ENCODE measurements at regions of chr17 and their contacts with region 1.

Region 1: DNA sequence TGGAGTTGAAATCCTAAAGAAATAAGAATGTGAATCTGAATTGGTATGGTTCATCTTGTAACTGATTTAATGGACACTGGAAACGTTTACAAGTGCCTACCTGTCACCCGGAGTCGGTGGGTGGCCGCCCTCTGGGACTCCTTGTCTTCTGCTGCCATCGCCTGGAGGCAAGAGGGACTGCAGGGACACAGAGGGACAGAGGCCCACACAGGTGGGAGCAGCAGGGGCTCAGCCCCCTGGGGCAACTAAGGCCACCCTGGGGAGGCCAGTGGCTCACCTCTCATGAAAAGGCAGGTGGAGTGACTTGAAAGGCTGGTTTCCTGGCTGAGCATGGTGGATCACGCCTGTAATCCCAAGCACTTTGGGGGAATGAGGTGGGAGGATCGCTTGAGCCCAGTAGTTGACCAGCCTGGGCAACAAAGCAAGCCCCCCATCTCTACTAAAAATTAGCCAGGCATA is 23.2 kb downstream of the TMEM92 start:
- DNase-seq: peak; percentile 82
- ATAC-seq: peak; percentile 99
- H3K4me3 ChIP-seq: no peak overlapping the region
- H3K27ac ChIP-seq: no peak overlapping the region
- H3K4me1 ChIP-seq: no peaks in the 10 kb centered on the region
- H3K27me3 ChIP-seq: no peaks in the 10 kb centered on the region
- CTCF ChIP-seq: peak; percentile 96

Region 2: GRCh38 chr17:50169121-50169764 is 128.2 kb before region 1 on chr17:
- CTCF ChIA-PET with region 1: no interaction called
- POLR2A ChIA-PET with region 1: interaction called, 34 read pairs
- intact Hi-C with region 1: no loop called
- DNase-seq: peak; percentile 80
- ATAC-seq: peak; percentile 51
- H3K4me3 ChIP-seq: peak overlapping the region; percentile 21; the same call in 1 of the 2 replicates
- H3K27ac ChIP-seq: peak overlapping the region; percentile 51
- H3K4me1 ChIP-seq: peaks cover 29% of the 10 kb centered on the region
- H3K27me3 ChIP-seq: no peaks in the 10 kb centered on the region
- CTCF ChIP-seq: peak; percentile 97

Region 3: GRCh38 chr17:50269477-50270434 is 27.7 kb before region 1 on chr17:
- CTCF ChIA-PET with region 1: interaction called, 9 read pairs
- POLR2A ChIA-PET with region 1: no interaction called
- intact Hi-C with region 1: loop called (anchors 1 kb)
- DNase-seq: peak; percentile 88
- ATAC-seq: peak; percentile 39
- H3K4me3 ChIP-seq: no peak overlapping the region
- H3K27ac ChIP-seq: no peak overlapping the region
- H3K4me1 ChIP-seq: peaks cover 34% of the 10 kb centered on the region
- H3K27me3 ChIP-seq: no peaks in the 10 kb centered on the region
- CTCF ChIP-seq: peak; percentile 96

Region 4: GRCh38 chr17:50276588-50277356 is 20.7 kb before region 1 on chr17:
- CTCF ChIA-PET with region 1: interaction called, 13 read pairs
- POLR2A ChIA-PET with region 1: no interaction called
- intact Hi-C with region 1: loop called (anchors 1 kb)
- DNase-seq: peak; percentile 55
- ATAC-seq: no peak
- H3K4me3 ChIP-seq: peak overlapping the region; percentile 48
- H3K27ac ChIP-seq: peak overlapping the region; percentile 63
- H3K4me1 ChIP-seq: peaks cover 65% of the 10 kb centered on the region
- H3K27me3 ChIP-seq: no peaks in the 10 kb centered on the region
- CTCF ChIP-seq: no peak

Region 5: GRCh38 chr17:50331085-50331791 is 33.8 kb after region 1 on chr17:
- CTCF ChIA-PET with region 1: interaction called, 8 read pairs
- POLR2A ChIA-PET with region 1: interaction called, 10 read pairs
- intact Hi-C with region 1: no loop called
- DNase-seq: peak; percentile 97
- ATAC-seq: peak; percentile 97
- H3K4me3 ChIP-seq: no peak overlapping the region
- H3K27ac ChIP-seq: peak overlapping the region; percentile 23
- H3K4me1 ChIP-seq: peaks cover 12% of the 10 kb centered on the region
- H3K27me3 ChIP-seq: no peaks in the 10 kb centered on the region
- CTCF ChIP-seq: no peak

Region 6: DNA sequence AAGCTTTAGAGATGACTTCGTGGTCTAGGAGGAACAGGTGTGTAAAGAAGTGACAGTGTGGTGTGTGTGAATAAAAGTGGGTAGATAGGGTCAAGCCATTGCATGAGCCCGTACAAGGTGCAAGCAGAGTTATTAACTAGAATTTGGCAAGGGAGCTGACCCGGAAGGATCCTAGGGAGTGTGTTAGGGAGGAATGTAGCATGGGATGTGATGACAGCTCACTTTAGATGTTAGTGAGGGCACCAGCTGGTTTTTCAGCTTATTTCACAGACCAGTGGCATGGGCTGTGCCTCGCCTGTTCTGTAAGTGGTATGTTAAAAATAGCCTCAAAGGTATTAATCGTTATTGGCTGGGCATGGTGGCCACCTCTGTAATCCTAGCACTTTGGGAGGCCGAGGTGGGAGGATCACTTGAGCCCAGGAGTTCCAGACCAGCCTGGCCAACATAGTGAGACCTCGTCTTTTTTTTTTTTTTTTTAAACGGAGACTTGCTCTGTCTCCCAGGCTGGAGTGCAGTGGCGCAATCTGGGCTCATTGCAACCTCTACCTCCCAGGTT is 461.6 kb after region 1 on chr17:
- CTCF ChIA-PET with region 1: interaction called, 10 read pairs
- POLR2A ChIA-PET with region 1: no interaction called
- intact Hi-C with region 1: no loop called
- DNase-seq: no peak
- ATAC-seq: peak; percentile 8; the same call in 1 of the 2 replicates
- H3K4me3 ChIP-seq: no peak overlapping the region
- H3K27ac ChIP-seq: no peak overlapping the region
- H3K4me1 ChIP-seq: no peaks in the 10 kb centered on the region
- H3K27me3 ChIP-seq: no peaks in the 10 kb centered on the region
- CTCF ChIP-seq: no peak

Region 7: DNA sequence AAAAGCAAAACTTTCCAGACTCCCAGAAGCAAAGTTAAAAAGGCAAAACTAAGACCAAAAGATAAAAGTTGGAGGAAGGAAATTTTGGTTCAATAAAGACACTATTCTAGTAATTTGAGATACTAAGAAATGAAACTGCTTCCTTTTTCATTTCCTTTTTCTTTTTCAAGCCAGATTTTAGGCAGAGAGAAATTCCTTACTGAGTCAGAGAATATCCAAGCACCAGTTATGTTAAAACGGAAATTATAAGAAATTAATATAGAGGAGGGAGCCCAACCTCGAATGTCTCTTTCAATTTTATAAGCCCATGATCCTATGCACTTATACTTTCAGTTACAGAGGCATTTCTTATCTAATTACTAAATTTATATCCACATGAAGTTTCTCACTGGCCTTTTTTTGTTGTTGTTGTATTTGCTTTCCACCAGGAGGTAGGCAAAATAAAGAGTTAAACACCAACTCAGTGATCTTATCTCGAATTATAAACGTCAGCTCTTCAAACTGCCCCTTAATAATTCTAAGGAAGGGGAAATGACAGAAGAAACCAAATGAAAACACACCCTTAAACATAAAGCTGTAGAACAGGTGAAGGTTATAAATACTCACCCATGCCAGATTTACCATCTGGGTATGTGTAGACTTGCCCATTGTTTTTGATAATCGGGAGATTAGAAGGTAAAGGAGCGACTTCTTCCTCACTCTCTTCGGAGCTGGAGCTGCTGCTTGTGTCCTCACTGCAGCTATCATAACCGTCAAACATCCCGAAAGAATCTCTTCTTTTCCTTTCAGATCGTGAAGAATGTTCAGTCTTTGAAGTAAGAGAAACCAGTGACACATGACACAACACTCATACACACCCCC is 927.2 kb after region 1 on chr17:
- CTCF ChIA-PET with region 1: no interaction called
- POLR2A ChIA-PET with region 1: no interaction called
- intact Hi-C with region 1: no loop called
- DNase-seq: no peak
- ATAC-seq: no peak
- H3K4me3 ChIP-seq: no peak overlapping the region
- H3K27ac ChIP-seq: no peak overlapping the region
- H3K4me1 ChIP-seq: 0 out of 2 replicates have a peak, but pooled peaks cover 6% of the 10 kb centered on the region
- H3K27me3 ChIP-seq: no peaks in the 10 kb centered on the region
- CTCF ChIP-seq: no peak